Activated CD4-positive, alpha-beta T cell treated with anti-CD3 and anti-CD28 coated beads, Interleukin-2, amount 10 ng/mL, durations not matched to agents 7 days and 5 days (primary cell): ENCODE measurements at regions of chr7 and their contacts with region 1.

Region 1: GRCh38 chr7:2451171-2452073 is 24.8 kb downstream of the GRIFIN start:
- DNase-seq: peak; percentile 73
- H3K4me3 Mint-ChIP-seq: no peak overlapping the region
- H3K27ac Mint-ChIP-seq: no peak overlapping the region
- H3K4me1 Mint-ChIP-seq: peaks cover 6% of the 10 kb centered on the region
- H3K27me3 Mint-ChIP-seq: peaks cover 12% of the 10 kb centered on the region

Region 2: GRCh38 chr7:2266908-2267307 is 184.5 kb before region 1 on chr7:
- CTCF ChIA-PET with region 1: no interaction called
- POLR2A ChIA-PET with region 1: no interaction called
- DNase-seq: no peak
- H3K4me3 Mint-ChIP-seq: no peak overlapping the region
- H3K27ac Mint-ChIP-seq: no peak overlapping the region
- H3K4me1 Mint-ChIP-seq: peaks cover 2% of the 10 kb centered on the region
- H3K27me3 Mint-ChIP-seq: no peaks in the 10 kb centered on the region

Region 3: DNA sequence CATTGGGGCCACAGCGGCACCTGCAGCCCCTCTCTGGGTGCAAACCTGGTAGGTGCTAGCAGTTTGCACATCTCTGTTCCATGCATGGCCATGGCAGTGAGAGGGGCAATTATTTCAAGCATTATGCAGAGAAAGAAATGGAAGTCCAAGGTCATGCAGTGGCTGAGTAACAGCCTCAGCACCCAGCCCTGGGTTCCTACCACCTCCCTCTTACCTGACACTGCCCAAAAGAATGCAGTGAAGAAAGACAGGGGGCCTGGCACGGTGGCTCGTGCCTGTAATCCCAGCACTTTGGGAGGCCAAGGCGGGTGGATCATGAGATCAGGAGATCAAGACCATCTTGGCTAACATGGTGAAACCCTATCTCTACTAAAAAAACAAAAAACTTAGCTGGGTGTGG is 52.9 kb before region 1 on chr7:
- CTCF ChIA-PET with region 1: interaction called, 6 read pairs
- POLR2A ChIA-PET with region 1: interaction called, 10 read pairs
- DNase-seq: no peak
- H3K4me3 Mint-ChIP-seq: no peak overlapping the region
- H3K27ac Mint-ChIP-seq: no peak overlapping the region
- H3K4me1 Mint-ChIP-seq: peaks cover 25% of the 10 kb centered on the region
- H3K27me3 Mint-ChIP-seq: no peaks in the 10 kb centered on the region

Region 4: DNA sequence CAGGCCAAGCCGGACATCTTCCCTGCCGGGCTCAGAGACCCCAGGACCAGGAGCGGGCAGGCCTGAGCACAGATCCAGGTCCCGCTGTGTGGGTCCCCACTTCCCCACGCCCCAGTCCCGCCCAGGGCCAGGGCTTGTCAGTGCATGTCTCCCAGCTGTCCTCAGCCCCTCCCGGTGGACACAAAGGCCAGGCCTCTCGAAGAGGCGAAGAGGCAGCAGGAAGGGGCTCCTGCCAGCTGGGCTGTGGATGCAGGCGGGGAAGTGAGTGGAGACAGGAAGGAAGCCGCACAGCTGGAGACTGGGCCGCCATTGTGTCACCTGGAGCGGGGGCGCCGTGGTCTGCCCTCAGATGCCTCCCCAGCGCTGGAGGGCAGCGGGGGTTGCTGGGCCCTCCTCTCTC is 20.0 kb after region 1 on chr7:
- CTCF ChIA-PET with region 1: interaction called, 53 read pairs
- POLR2A ChIA-PET with region 1: no interaction called
- DNase-seq: no peak
- H3K4me3 Mint-ChIP-seq: no peak overlapping the region
- H3K27ac Mint-ChIP-seq: no peak overlapping the region
- H3K4me1 Mint-ChIP-seq: peaks cover 4% of the 10 kb centered on the region
- H3K27me3 Mint-ChIP-seq: peaks cover 15% of the 10 kb centered on the region